ENCODE measurements at regions of chr6 and their contacts with region 1.

Region 1: GRCh38 chr6:71012866-71013469 is 56.1 kb upstream of the B3GAT2 start:
- DNase-seq: peak; percentile 27
- ATAC-seq: peak; percentile 95
- H3K4me3 ChIP-seq: no peak overlapping the region
- H3K27ac ChIP-seq: no peak overlapping the region
- H3K4me1 ChIP-seq: no peaks in the 10 kb centered on the region
- H3K27me3 ChIP-seq: no peaks in the 10 kb centered on the region
- CTCF ChIP-seq: peak; percentile 84

Region 2: DNA sequence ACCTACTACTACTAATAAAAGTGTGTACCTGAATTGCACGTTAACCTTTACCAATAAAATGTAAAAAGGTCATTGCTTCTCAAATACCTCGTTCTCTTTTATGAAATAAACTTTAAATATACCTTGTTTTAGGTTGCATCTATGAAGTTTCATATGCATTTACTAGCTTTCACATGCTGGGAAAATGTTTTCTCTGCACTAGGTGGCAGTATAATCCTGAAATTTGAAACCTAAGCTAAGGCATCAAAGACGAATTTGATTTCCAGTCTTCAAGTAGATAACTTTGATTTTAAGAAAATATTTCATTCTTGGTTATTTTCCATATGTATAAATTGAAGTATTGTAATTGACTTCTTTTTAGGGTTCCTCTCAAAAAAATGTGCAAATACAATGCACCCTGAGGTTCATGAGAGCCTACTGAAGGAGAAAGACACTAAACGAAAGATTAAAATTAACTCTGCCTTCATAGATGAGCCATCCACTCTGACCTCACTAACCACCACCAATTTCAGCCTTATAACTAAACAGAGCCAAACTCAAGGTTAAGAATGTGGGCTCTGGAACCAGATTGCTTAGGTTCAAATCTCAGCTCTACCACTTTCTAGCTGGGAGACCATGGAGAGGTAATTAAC is 702.8 kb before region 1 on chr6:
- CTCF ChIA-PET with region 1: no interaction called
- POLR2A ChIA-PET with region 1: no interaction called
- in situ Hi-C with region 1: no loop called
- intact Hi-C with region 1: loop called (anchors 5 kb)
- DNase-seq: peak; percentile 33
- ATAC-seq: no peak
- H3K4me3 ChIP-seq: no peak overlapping the region
- H3K27ac ChIP-seq: no peak overlapping the region
- H3K4me1 ChIP-seq: 0 out of 2 replicates have a peak, but pooled peaks cover 3% of the 10 kb centered on the region
- H3K27me3 ChIP-seq: peaks cover 10% of the 10 kb centered on the region
- CTCF ChIP-seq: peak; percentile 72; the same call in 1 of the 2 replicates

Region 3: GRCh38 chr6:70547313-70547712 is 465.7 kb before region 1 on chr6:
- CTCF ChIA-PET with region 1: no interaction called
- POLR2A ChIA-PET with region 1: no interaction called
- in situ Hi-C with region 1: no loop called
- intact Hi-C with region 1: loop called (anchors 5 kb)
- DNase-seq: no peak
- ATAC-seq: 0 out of 2 replicates have a peak, but pooled peaks have one; percentile 74
- H3K4me3 ChIP-seq: no peak overlapping the region
- H3K27ac ChIP-seq: no peak overlapping the region
- H3K4me1 ChIP-seq: no peaks in the 10 kb centered on the region
- H3K27me3 ChIP-seq: no peaks in the 10 kb centered on the region
- CTCF ChIP-seq: peak; percentile 63

Region 4: GRCh38 chr6:70599187-70599586 is 413.8 kb before region 1 on chr6:
- CTCF ChIA-PET with region 1: no interaction called
- POLR2A ChIA-PET with region 1: no interaction called
- in situ Hi-C with region 1: no loop called
- intact Hi-C with region 1: no loop called
- DNase-seq: no peak
- ATAC-seq: no peak
- H3K4me3 ChIP-seq: no peak overlapping the region
- H3K27ac ChIP-seq: no peak overlapping the region
- H3K4me1 ChIP-seq: no peaks in the 10 kb centered on the region
- H3K27me3 ChIP-seq: no peaks in the 10 kb centered on the region
- CTCF ChIP-seq: no peak

Region 5: GRCh38 chr6:70894001-70894400 is 119.0 kb before region 1 on chr6:
- CTCF ChIA-PET with region 1: no interaction called
- POLR2A ChIA-PET with region 1: no interaction called
- in situ Hi-C with region 1: no loop called
- intact Hi-C with region 1: loop called (anchors 5 kb)
- DNase-seq: no peak
- ATAC-seq: no peak
- H3K4me3 ChIP-seq: no peak overlapping the region
- H3K27ac ChIP-seq: no peak overlapping the region
- H3K4me1 ChIP-seq: no peaks in the 10 kb centered on the region
- H3K27me3 ChIP-seq: peaks cover 13% of the 10 kb centered on the region; the same call in 1 of the 2 replicates
- CTCF ChIP-seq: no peak

Measured in Panc1 (cell line).